GM10248 (cell line): ENCODE measurements at regions of chr3 and their contacts with region 1.

Region 1: GRCh38 chr3:47022641-47023071 is 43.2 kb downstream of the NBEAL2 start:
- DNase-seq: no peak
- CTCF ChIP-seq: no peak

Region 2: GRCh38 chr3:47035634-47036033 is 13.0 kb after region 1 on chr3:
- CTCF ChIA-PET with region 1: interaction called, 25 read pairs
- POLR2A ChIA-PET with region 1: no interaction called
- DNase-seq: no peak
- CTCF ChIP-seq: no peak

Region 3: GRCh38 chr3:47365213-47366153 is 342.8 kb after region 1 on chr3:
- CTCF ChIA-PET with region 1: no interaction called
- POLR2A ChIA-PET with region 1: no interaction called
- DNase-seq: no peak
- CTCF ChIP-seq: no peak